Thyroid gland (tissue), 4 donors: ENCODE measurements at regions of chr4 and their contacts with region 1.

Region 1: GRCh38 chr4:19224820-19225219 is 1026.9 kb upstream of the SLIT2 start:
- DNase-seq: no peak
- H3K4me3 ChIP-seq: no peak overlapping the region
- H3K27ac ChIP-seq: no peak overlapping the region
- H3K4me1 ChIP-seq: no peaks in the 10 kb centered on the region
- H3K27me3 ChIP-seq: no peaks in the 10 kb centered on the region
- CTCF ChIP-seq: peak in 3 of 6 experiments; percentile 36 to 53 (median 41)
- POLR2A ChIP-seq: no peak

Region 2: GRCh38 chr4:18695733-18696527 is 528.9 kb before region 1 on chr4:
- intact Hi-C with region 1: no loop called
- DNase-seq: no peak
- H3K4me3 ChIP-seq: no peak overlapping the region
- H3K27ac ChIP-seq: no peak overlapping the region
- H3K4me1 ChIP-seq: no peaks in the 10 kb centered on the region
- H3K27me3 ChIP-seq: no peaks in the 10 kb centered on the region
- CTCF ChIP-seq: no peak
- POLR2A ChIP-seq: no peak

Region 3: GRCh38 chr4:20248155-20248558 is 1023.3 kb after region 1 on chr4:
- intact Hi-C with region 1: loop called (anchors 10 kb)
- DNase-seq: no peak
- H3K4me3 ChIP-seq: no peak overlapping the region
- H3K27ac ChIP-seq: no peak overlapping the region
- H3K4me1 ChIP-seq: peaks cover 0 to 7% of the 10 kb centered on the region in 2 donors
- H3K27me3 ChIP-seq: no peaks in the 10 kb centered on the region
- CTCF ChIP-seq: peak in 5 of 6 experiments; percentile 27 to 64 (median 51)
- POLR2A ChIP-seq: no peak